Activated T-helper 2 cell treated with anti-CD3 and anti-CD28 coated beads, Interferon-gamma antibody, Interleukin-2, Interleukin-4, amounts not matched to agents 10 μg/mL and 5 μg/mL and 100 μg/mL, durations not matched to agents 14 hours and 24 hours and 36 hours (primary cell): ENCODE measurements at regions of chr5 and their contacts with region 1.

Region 1: DNA sequence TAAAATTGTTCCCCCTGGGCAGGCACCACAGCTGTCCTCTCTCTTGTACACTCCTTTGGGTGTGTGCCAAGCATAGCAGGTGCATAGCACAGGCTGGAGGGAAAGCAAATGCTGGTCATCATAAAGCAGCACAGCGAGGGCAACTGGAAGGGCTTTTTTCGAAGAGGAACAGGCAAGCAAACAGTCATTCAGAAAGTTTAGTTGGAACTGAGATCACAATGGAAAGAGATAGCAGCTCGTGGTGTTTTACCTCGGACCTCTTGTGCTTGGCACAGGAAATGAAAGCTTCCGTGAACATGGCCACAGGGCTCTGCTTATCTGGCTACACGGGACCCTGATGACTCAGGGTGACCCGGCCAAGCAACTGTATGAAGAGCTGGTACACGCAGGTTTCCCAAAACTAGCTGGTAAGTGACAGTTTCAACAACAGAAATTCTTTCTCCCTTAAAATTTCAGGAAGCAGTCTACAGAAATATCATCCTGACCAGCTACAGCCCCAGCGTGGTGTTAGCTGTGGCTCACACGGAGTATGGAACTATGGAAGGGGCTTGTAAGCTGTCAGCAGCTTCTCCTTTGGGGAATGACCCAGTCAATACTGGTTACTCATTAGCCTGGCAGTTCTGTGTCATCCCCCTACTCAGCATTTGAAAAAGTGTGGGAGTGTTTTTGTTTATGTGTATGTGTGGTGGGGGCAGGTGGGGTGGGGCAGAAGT is 48.1 kb downstream of the POC5 start:
- DNase-seq: peak; percentile 57
- H3K4me3 Mint-ChIP-seq: peak overlapping the region; percentile 65
- H3K27ac Mint-ChIP-seq: peak overlapping the region; percentile 92
- H3K4me1 Mint-ChIP-seq: peaks cover 54% of the 10 kb centered on the region
- H3K27me3 Mint-ChIP-seq: no peaks in the 10 kb centered on the region

Region 2: GRCh38 chr5:75320341-75320740 is 348.8 kb before region 1 on chr5:
- intact Hi-C with region 1: loop called (anchors 1 kb)
- DNase-seq: no peak
- H3K4me3 Mint-ChIP-seq: no peak overlapping the region
- H3K27ac Mint-ChIP-seq: peak overlapping the region; percentile 77
- H3K4me1 Mint-ChIP-seq: peaks cover 24% of the 10 kb centered on the region
- H3K27me3 Mint-ChIP-seq: no peaks in the 10 kb centered on the region

Region 3: GRCh38 chr5:75351139-75351926 is 317.8 kb before region 1 on chr5:
- intact Hi-C with region 1: loop called (anchors 1 kb)
- DNase-seq: no peak
- H3K4me3 Mint-ChIP-seq: peak overlapping the region; percentile 30
- H3K27ac Mint-ChIP-seq: peak overlapping the region; percentile 80
- H3K4me1 Mint-ChIP-seq: peaks cover 42% of the 10 kb centered on the region
- H3K27me3 Mint-ChIP-seq: no peaks in the 10 kb centered on the region

Region 4: GRCh38 chr5:75511435-75512384 is 157.4 kb before region 1 on chr5 and contains the starts of genes CERT1 and POLK:
- intact Hi-C with region 1: loop called (anchors 1 kb)
- DNase-seq: peak; percentile 95
- H3K4me3 Mint-ChIP-seq: peak within 1 kb of the TSS; percentile 100
- H3K27ac Mint-ChIP-seq: peak within 1 kb of the TSS; percentile 90
- H3K4me1 Mint-ChIP-seq: peaks cover 51% of the 10 kb centered on the region
- H3K27me3 Mint-ChIP-seq: no peaks in the 10 kb centered on the region
- total RNA-seq, gene CERT1: 38.6 and 43.7 TPM in 2 replicates
- total RNA-seq, gene POLK: 41.4 and 42.6 TPM in 2 replicates

Region 5: GRCh38 chr5:75558981-75559632 is 110.0 kb before region 1 on chr5:
- intact Hi-C with region 1: no loop called
- DNase-seq: no peak
- H3K4me3 Mint-ChIP-seq: no peak overlapping the region
- H3K27ac Mint-ChIP-seq: no peak overlapping the region
- H3K4me1 Mint-ChIP-seq: peaks cover 11% of the 10 kb centered on the region
- H3K27me3 Mint-ChIP-seq: no peaks in the 10 kb centered on the region

Region 6: GRCh38 chr5:75681125-75681830 is 12.1 kb after region 1 on chr5:
- intact Hi-C with region 1: loop called (anchors 1 kb)
- DNase-seq: no peak
- H3K4me3 Mint-ChIP-seq: no peak overlapping the region
- H3K27ac Mint-ChIP-seq: no peak overlapping the region
- H3K4me1 Mint-ChIP-seq: peaks cover 23% of the 10 kb centered on the region
- H3K27me3 Mint-ChIP-seq: no peaks in the 10 kb centered on the region

Region 7: DNA sequence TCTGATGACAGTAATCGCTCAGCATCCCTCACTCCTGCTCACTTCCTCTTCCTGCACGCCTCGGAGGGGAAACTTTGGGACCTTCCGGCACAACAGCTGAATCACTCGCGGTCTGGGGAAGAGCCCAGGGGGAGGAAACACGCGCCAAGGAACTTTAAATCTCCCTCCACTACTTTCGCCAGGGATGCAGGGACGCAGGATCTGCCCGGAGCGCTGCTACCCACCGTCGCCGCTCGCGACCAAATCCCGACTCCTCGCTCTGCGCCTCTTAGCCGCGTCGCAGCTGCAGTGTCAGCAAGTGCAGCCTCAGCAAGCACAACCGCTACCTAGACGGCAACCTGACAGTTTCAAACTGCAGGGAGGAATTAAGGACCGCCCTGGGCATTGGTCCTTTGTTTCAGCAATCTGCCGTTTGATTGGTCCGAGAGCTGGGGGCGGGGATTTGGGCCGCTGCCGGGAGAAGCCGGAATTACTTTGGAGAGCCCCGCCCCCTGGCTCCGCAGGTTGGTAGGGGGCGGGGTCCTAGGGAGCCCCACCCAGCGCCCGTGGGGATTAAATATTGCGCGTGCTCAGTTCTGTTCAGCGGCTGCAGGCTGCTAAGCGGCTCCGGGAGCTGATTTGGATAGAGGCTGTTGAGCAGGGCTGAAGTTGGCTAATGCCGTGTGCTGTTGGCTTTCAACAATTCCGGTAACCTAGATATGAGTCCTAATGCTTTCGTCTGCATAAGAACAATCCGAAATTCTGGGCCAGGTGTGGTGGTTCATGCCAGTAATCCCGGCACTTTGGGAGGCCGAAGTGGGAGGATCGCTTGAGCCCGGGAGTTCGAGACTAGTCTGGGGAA is 48.2 kb after region 1 on chr5 and contains the start of gene POC5:
- intact Hi-C with region 1: loop called (anchors 1 kb)
- DNase-seq: peak; percentile 97
- H3K4me3 Mint-ChIP-seq: peak within 1 kb of the TSS; percentile 100
- H3K27ac Mint-ChIP-seq: peak within 1 kb of the TSS; percentile 100
- H3K4me1 Mint-ChIP-seq: peaks cover 29% of the 10 kb centered on the region
- H3K27me3 Mint-ChIP-seq: peaks cover 10% of the 10 kb centered on the region
- total RNA-seq, gene POC5: 16.2 and 16.5 TPM in 2 replicates

Region 8: DNA sequence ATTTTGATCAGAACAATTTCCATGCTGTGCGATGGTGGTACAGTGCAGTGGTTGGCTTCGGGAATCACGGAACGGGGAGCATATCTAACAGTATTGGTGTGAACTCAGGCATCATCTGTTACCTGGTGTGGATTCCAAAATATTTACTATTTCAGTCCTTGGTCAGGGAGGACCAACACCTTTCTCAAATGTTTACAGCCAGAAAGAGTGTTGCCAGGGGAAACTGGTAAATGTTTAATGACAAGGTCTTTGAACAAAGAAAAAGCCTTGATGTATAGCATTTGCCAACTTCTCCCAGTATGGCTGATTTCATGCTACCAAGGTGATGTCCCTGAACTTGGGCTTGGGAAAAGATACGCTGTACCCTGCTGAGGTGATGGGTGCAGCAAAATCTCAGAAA is 193.7 kb after region 1 on chr5:
- intact Hi-C with region 1: no loop called
- DNase-seq: no peak
- H3K4me3 Mint-ChIP-seq: no peak overlapping the region
- H3K27ac Mint-ChIP-seq: no peak overlapping the region
- H3K4me1 Mint-ChIP-seq: no peaks in the 10 kb centered on the region
- H3K27me3 Mint-ChIP-seq: no peaks in the 10 kb centered on the region